Activated CD4-positive, alpha-beta T cell treated with anti-CD3 and anti-CD28 coated beads for 36 hours (primary cell): ENCODE measurements at regions of chr10 and their contacts with region 1.

Region 1: DNA sequence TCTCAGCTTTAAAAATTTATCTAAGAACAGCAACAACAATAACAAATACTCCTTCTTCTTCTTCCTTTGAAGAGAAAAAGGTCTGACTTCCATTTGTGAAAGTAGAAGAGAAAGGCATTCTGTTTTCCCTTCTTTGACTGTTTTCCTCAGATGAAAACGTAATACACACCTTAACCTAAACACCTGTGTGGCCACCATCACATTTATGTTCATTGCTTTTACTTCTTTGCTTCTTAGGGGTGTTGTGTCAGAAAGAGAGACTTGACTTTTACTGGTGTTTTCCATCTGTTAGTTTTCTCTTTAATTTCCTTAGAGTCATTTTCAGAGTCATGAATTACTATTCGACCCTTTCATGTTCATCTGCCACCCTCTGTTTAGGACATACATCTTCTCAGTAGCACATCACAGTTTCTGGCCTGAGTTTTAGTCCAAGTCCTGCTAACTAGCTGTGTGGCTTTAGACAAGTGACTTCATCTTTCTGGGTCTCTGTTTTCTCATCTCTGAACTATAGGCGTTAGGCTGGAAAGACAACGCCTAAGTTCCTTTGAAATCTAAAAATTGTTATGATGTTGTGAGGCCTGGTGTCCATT is 283.8 kb downstream of the GATA3 start:
- DNase-seq: peak; percentile 27
- ATAC-seq: peak; percentile 96
- H3K4me3 Mint-ChIP-seq: peak overlapping the region; percentile 14
- H3K27ac Mint-ChIP-seq: peak overlapping the region; percentile 86
- H3K4me1 Mint-ChIP-seq: peaks cover 31% of the 10 kb centered on the region
- H3K27me3 Mint-ChIP-seq: no peaks in the 10 kb centered on the region

Region 2: DNA sequence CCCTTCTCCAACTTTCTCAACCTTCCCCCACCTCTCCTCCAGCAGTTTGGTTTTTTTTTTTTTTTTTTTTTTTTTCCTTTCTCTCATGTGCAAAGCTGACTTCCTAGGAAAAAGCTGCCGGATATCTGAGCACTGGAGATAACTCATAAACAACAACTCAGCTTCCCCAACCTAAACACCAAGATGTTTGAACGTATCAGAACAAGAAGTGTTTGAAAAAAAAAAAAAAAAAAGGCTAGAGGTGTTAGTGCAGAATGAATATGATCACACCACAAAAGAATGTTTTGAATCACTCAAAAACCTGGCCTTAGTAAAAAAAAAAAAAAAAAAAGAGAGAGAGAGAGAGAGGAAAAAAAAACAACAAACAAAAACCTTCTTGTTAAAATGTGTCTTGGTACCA is 272.6 kb before region 1 on chr10:
- CTCF ChIA-PET with region 1: no interaction called
- POLR2A ChIA-PET with region 1: no interaction called
- intact Hi-C with region 1: loop called (anchors 1 to 2 kb)
- DNase-seq: no peak
- ATAC-seq: peak; percentile 43
- H3K4me3 Mint-ChIP-seq: peak overlapping the region; percentile 64
- H3K27ac Mint-ChIP-seq: peak overlapping the region; percentile 90
- H3K4me1 Mint-ChIP-seq: peaks cover 95% of the 10 kb centered on the region
- H3K27me3 Mint-ChIP-seq: no peaks in the 10 kb centered on the region

Region 3: GRCh38 chr10:8315619-8316021 is 22.7 kb before region 1 on chr10:
- CTCF ChIA-PET with region 1: interaction called, 3 read pairs
- POLR2A ChIA-PET with region 1: no interaction called
- intact Hi-C with region 1: loop called (anchors 1 to 2 kb)
- DNase-seq: peak; percentile 44
- ATAC-seq: peak; percentile 84
- H3K4me3 Mint-ChIP-seq: no peak overlapping the region
- H3K27ac Mint-ChIP-seq: peak overlapping the region; percentile 78
- H3K4me1 Mint-ChIP-seq: peaks cover 56% of the 10 kb centered on the region
- H3K27me3 Mint-ChIP-seq: peaks cover 2% of the 10 kb centered on the region

Region 4: DNA sequence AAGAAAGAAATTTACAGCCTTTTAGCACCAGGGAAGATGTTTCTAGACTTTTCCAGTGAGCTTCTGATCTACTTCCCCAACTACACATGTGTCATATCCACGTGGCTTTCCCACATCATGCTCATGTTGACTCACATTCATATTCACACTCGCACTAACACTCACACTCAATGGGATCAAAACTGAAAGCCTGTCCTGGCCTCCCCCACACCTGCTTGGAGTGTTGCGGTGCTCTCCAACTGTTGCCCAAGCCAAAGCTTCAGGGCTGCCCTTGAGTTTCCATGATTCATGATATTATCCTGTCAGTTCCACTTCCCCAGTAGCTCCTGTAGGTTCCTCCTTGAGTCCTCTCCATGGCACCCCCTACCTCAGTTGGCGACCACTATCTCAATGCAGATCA is 160.6 kb after region 1 on chr10:
- CTCF ChIA-PET with region 1: no interaction called
- POLR2A ChIA-PET with region 1: no interaction called
- intact Hi-C with region 1: no loop called
- DNase-seq: peak; percentile 38
- ATAC-seq: peak; percentile 83
- H3K4me3 Mint-ChIP-seq: no peak overlapping the region
- H3K27ac Mint-ChIP-seq: no peak overlapping the region
- H3K4me1 Mint-ChIP-seq: peaks cover 14% of the 10 kb centered on the region
- H3K27me3 Mint-ChIP-seq: peaks cover 14% of the 10 kb centered on the region